ENCODE measurements at regions of chr12 and their contacts with region 1.

Region 1: DNA sequence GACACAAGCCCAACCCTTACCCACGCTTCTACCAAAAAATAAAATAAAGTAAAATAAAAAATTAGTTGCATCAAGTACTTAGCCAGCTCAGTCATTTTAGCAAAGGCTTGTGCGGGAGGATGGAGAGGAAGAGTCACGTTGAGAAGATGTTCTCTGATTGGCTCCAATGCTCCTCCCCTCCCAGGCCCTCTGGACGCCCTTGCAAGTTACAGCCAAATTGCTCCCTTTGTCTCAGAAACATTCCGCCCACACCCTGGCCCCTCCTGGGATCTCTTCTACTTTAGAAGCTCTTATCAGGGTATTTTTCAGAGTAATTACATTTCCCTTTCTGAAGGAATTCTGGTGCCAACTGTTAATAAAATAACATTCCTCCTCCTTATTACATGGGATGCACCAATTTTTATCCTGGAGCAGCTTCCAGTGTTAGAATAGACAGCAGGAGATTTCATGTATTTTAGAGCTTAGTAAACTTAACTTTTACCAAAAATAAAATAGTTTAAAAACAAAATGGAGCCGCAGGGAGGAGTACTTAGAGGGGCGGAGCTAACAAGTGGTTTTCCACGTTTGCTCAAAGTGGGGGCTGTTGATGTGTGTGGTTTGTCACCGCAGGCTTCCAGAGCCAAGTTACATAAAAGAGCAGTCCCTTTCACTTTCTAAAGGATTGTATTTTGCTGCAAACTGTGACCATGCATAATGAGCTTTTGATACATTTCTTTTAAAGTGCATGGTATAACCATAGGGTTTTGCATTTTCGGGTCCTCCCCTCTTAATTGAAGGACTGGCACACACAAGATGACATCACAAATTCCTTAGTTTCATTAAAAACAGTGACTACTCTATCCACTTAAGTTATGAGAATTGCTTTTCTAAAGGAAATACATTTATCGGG is 71.7 kb upstream of the RAP1B start:
- DNase-seq: peak; percentile 57 to 87
- ATAC-seq: peak; percentile 85 to 94 (median 89)
- H3K4me3 ChIP-seq: peak overlapping the region; percentile 6
- H3K4me3 Mint-ChIP-seq: peak overlapping the region; percentile 83
- H3K27ac ChIP-seq: peak overlapping the region; percentile 76
- H3K27ac Mint-ChIP-seq: peak overlapping the region; percentile 75 to 80
- H3K4me1 ChIP-seq: peaks cover 50% of the 10 kb centered on the region
- H3K4me1 Mint-ChIP-seq: peaks cover 43 to 59% of the 10 kb centered on the region in 2 donors
- H3K27me3 ChIP-seq: no peaks in the 10 kb centered on the region
- H3K27me3 Mint-ChIP-seq: no peaks in the 10 kb centered on the region
- CTCF ChIP-seq: no peak

Region 2: GRCh38 chr12:68331869-68332727 is 206.9 kb before region 1 on chr12 and contains the start of gene MDM1:
- intact Hi-C with region 1: loop called (anchors 1 kb)
- DNase-seq: peak; percentile 93 to 98
- ATAC-seq: peak; percentile 96 to 98 (median 96)
- H3K4me3 ChIP-seq: peak within 1 kb of the TSS; percentile 72
- H3K4me3 Mint-ChIP-seq: peak within 1 kb of the TSS; percentile 89
- H3K27ac ChIP-seq: peak within 1 kb of the TSS; percentile 71
- H3K27ac Mint-ChIP-seq: peak within 1 kb of the TSS; percentile 86 to 91
- H3K4me1 ChIP-seq: peaks cover 12% of the 10 kb centered on the region
- H3K4me1 Mint-ChIP-seq: peaks cover 44 to 57% of the 10 kb centered on the region in 2 donors
- H3K27me3 ChIP-seq: no peaks in the 10 kb centered on the region
- H3K27me3 Mint-ChIP-seq: no peaks in the 10 kb centered on the region
- CTCF ChIP-seq: no peak
- total RNA-seq, gene MDM1: 21.3 to 36.2 (median 26.5) TPM

Region 3: DNA sequence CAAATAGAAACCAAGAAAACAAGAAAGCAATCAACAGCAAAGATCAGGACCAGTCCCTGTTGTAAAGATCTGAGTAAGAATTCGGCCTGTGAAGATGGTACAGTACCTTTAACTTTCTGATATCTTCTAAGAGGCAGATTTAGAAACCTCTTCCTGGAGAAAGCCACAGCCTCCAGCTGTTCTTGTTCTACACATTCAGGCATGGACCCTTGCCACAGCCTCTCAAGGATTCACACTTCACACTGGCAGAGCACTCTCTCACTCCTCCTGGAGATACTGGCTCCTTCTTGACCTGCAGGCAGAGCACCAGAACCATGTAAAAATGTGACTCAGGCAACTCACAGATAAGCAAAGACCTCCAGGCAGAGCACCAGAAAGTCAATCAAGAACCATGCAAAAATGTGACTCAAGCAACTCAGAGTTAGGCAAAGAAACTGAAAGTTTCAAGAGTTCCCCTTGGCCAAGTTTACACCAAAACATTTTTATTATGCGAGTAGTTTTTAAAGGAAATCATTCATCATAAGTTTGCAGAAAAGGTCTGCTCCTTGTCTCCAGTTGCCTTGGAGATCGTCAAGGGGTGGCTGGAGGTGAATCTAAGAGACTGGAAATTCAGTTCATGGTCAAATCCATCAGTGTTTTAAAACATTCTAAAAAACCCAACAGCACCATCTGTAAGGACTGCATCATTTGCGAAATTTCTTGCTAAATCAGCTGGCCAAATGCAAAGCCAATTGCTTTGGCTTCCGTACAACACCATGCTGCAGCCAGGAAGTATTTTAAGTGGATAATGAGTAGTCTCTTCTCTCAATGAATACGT is 87.5 kb before region 1 on chr12:
- intact Hi-C with region 1: loop called (anchors 5 kb)
- DNase-seq: peak; percentile 50 to 54
- ATAC-seq: peak; percentile 65 to 73 (median 67)
- H3K4me3 ChIP-seq: peak overlapping the region; percentile 40
- H3K4me3 Mint-ChIP-seq: peak overlapping the region; percentile 90
- H3K27ac ChIP-seq: peak overlapping the region; percentile 67
- H3K27ac Mint-ChIP-seq: peak overlapping the region; percentile 87 to 90
- H3K4me1 ChIP-seq: peaks cover 46% of the 10 kb centered on the region
- H3K4me1 Mint-ChIP-seq: peaks cover 98 to 100% of the 10 kb centered on the region in 2 donors
- H3K27me3 ChIP-seq: no peaks in the 10 kb centered on the region
- H3K27me3 Mint-ChIP-seq: no peaks in the 10 kb centered on the region
- CTCF ChIP-seq: no peak

Region 4: GRCh38 chr12:68497702-68498101 is 41.3 kb before region 1 on chr12:
- intact Hi-C with region 1: loop called (anchors 5 kb)
- DNase-seq: peak in 1 of 2 donors; percentile 25
- ATAC-seq: peak; percentile 68 to 90 (median 82)
- H3K4me3 ChIP-seq: no peak overlapping the region
- H3K4me3 Mint-ChIP-seq: peak overlapping the region; percentile 72
- H3K27ac ChIP-seq: no peak overlapping the region
- H3K27ac Mint-ChIP-seq: peak overlapping the region; percentile 84 to 90
- H3K4me1 ChIP-seq: no peaks in the 10 kb centered on the region
- H3K4me1 Mint-ChIP-seq: peaks cover 31 to 58% of the 10 kb centered on the region in 2 donors
- H3K27me3 ChIP-seq: no peaks in the 10 kb centered on the region
- H3K27me3 Mint-ChIP-seq: no peaks in the 10 kb centered on the region
- CTCF ChIP-seq: no peak

Region 5: DNA sequence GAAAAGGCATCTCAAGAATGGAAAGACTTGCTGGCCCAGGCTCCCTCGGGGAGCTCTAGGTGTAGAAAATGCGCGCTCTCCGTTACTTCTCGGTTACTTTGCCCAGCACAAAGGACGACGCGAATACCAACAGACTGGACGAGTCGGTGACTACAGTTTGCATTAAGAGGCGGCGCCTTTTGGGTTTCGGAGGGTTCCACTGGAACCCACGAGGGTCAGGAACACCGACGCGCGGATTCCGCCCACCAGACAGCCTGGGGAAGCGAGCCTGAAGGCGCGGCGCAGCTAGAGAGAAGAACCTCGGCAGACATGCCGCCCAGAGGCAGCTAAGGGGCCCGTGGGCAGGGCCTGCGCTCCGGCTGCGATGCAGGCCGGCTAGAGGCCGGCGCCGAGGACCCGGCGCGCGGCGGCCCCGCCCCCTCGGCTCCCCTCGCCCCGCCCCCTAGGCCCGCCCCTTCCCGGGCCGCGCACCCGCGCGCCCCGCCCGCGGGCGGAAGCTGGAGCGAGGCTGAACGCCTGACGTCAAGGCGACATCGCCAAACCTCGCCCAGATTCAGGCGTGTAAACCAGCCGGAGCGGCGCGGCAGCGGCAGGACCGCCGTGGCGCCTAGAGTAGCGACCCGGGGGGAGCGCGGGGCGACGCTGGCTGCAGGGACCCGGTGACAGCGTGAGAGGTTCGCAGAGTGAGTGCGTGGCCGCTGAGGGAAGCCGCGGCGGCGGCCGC is 71.6 kb after region 1 on chr12 and contains the start of gene RAP1B:
- intact Hi-C with region 1: loop called (anchors 5 kb)
- DNase-seq: peak; percentile 87 to 96
- ATAC-seq: peak; percentile 76 to 94 (median 85)
- H3K4me3 ChIP-seq: peak within 1 kb of the TSS; percentile 100
- H3K4me3 Mint-ChIP-seq: peak within 1 kb of the TSS; percentile 98
- H3K27ac ChIP-seq: peak within 1 kb of the TSS; percentile 99
- H3K27ac Mint-ChIP-seq: peak within 1 kb of the TSS; percentile 84 to 95
- H3K4me1 ChIP-seq: peaks cover 19% of the 10 kb centered on the region
- H3K4me1 Mint-ChIP-seq: peaks cover 57 to 58% of the 10 kb centered on the region in 2 donors
- H3K27me3 ChIP-seq: no peaks in the 10 kb centered on the region
- H3K27me3 Mint-ChIP-seq: no peaks in the 10 kb centered on the region
- CTCF ChIP-seq: no peak
- total RNA-seq, gene RAP1B: 517 to 664 (median 572) TPM

Region 6: GRCh38 chr12:68745904-68746571 is 207.1 kb after region 1 on chr12 and contains the start of gene SLC35E3:
- intact Hi-C with region 1: no loop called
- DNase-seq: peak; percentile 88 to 95
- ATAC-seq: peak; percentile 96 to 99 (median 99)
- H3K4me3 ChIP-seq: peak within 1 kb of the TSS; percentile 80
- H3K4me3 Mint-ChIP-seq: peak within 1 kb of the TSS; percentile 97
- H3K27ac ChIP-seq: peak within 1 kb of the TSS; percentile 81
- H3K27ac Mint-ChIP-seq: peak within 1 kb of the TSS; percentile 89 to 94
- H3K4me1 ChIP-seq: peaks cover 13% of the 10 kb centered on the region
- H3K4me1 Mint-ChIP-seq: peaks cover 39% of the 10 kb centered on the region in 2 donors
- H3K27me3 ChIP-seq: no peaks in the 10 kb centered on the region
- H3K27me3 Mint-ChIP-seq: no peaks in the 10 kb centered on the region
- CTCF ChIP-seq: no peak
- total RNA-seq, gene SLC35E3: 8.3 to 15.3 (median 10.2) TPM

Region 7: DNA sequence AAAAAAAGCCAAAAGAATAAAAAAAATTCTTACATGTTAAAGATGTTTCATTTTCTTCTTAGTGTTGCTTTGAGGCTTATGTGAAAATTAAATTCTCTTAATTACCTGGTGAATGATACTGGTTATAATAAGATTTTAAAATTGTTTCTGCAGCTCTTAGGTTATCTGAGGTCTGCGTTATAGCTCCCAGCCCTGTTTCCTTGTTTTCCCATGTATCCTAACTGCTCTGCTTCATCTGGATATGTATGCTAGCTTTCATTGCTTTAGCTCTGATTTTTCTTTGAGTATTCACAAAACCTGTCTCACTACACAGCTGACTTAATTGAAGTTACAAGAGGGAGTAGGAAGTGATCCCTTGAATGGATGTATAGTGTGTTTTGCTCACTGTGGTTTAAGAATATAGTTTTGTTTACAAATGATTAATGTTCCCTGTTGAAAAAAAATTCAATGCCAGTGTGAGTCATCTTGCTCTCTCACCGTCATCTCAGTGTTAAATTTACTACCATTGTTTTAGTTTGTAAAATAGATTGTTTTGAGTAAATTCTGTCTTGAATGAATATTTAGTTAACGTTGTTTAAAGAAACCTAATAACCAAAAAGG is 727.2 kb after region 1 on chr12:
- intact Hi-C with region 1: no loop called
- DNase-seq: no peak
- ATAC-seq: no peak
- H3K4me3 ChIP-seq: no peak overlapping the region
- H3K4me3 Mint-ChIP-seq: no peak overlapping the region
- H3K27ac ChIP-seq: no peak overlapping the region
- H3K27ac Mint-ChIP-seq: peak overlapping the region; percentile 2 to 7
- H3K4me1 ChIP-seq: no peaks in the 10 kb centered on the region
- H3K4me1 Mint-ChIP-seq: peaks cover 4 to 6% of the 10 kb centered on the region in 2 donors
- H3K27me3 ChIP-seq: no peaks in the 10 kb centered on the region
- H3K27me3 Mint-ChIP-seq: no peaks in the 10 kb centered on the region
- CTCF ChIP-seq: no peak

Measured in natural killer cell (primary cell).